Esophagus muscularis mucosa (tissue), 4 donors: ENCODE measurements at regions of chr5 and their contacts with region 1.

Region 1: DNA sequence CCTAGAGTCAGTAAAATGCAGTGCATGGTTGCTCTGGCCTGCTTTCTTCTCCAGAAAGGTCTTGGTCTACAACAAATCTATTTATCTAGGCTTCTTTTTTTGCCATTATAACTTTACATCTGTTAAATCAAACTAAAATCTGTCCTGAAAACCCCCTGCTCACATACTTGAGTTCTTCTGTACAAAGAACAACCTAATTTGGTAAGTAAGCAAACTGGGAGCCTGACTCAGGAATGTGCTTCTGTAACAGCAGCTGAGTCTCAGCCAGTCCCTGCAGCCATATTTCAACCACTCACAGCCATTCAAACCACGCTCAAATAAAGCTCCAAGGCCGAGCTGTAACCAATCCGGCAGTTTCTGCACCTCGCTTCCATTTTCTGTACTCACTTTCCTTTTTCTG is 95.8 kb downstream of the PLPP1 start:
- DNase-seq: no peak
- H3K4me3 ChIP-seq: no peak overlapping the region
- H3K27ac ChIP-seq: peak overlapping the region; percentile 88 to 89 (median 88)
- H3K4me1 ChIP-seq: peaks cover 54 to 76% (median 69%) of the 10 kb centered on the region in 4 donors
- H3K27me3 ChIP-seq: no peaks in the 10 kb centered on the region
- CTCF ChIP-seq: no peak
- EP300 ChIP-seq: no peak
- POLR2A ChIP-seq: no peak

Region 2: DNA sequence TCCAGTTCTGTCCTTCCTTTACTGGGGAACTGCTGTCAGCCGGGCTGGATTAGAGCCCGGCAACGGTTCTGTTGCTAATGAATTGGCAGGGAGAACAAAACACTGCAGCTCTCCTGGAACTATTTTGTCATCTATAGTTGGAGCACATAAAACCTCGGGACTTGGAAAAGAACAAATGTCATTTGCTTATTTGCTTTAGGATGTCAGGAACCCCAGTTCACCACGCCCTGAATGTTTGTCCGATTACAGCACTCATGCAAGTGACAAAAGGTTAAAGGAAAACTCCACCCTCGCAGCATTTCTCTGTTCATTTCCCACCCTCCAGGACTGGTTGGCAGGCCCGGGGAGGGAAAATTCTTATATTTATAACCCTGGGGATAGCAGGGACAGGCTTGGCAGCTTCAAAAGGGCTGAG is 162.2 kb after region 1 on chr5:
- intact Hi-C with region 1: loop called (anchors 2 kb)
- DNase-seq: peak; percentile 96
- H3K4me3 ChIP-seq: peak overlapping the region in 3 of 4 donors; percentile 9 to 24 (median 19)
- H3K27ac ChIP-seq: peak overlapping the region; percentile 84 to 93 (median 88)
- H3K4me1 ChIP-seq: peaks cover 76 to 85% (median 83%) of the 10 kb centered on the region in 4 donors
- H3K27me3 ChIP-seq: no peaks in the 10 kb centered on the region
- CTCF ChIP-seq: no peak
- EP300 ChIP-seq: peak; percentile 78
- POLR2A ChIP-seq: no peak